ENCODE measurements at regions of chr10 and their contacts with region 1.

Region 1: GRCh38 chr10:132844069-132844809 is 58.3 kb upstream of the NKX6-2 start:
- DNase-seq: no peak
- H3K4me3 ChIP-seq: no peak overlapping the region
- H3K27ac ChIP-seq: no peak overlapping the region
- H3K4me1 ChIP-seq: peaks cover 0 to 7% (median 0%) of the 10 kb centered on the region in 4 donors
- H3K27me3 ChIP-seq: peaks cover 41% of the 10 kb centered on the region
- CTCF ChIP-seq: no peak
- EP300 ChIP-seq: no peak
- POLR2A ChIP-seq: no peak

Region 2: GRCh38 chr10:131490991-131491594 is 1353.1 kb before region 1 on chr10:
- in situ Hi-C with region 1: no loop called
- intact Hi-C with region 1: loop called (anchors 5 kb)
- DNase-seq: no peak
- H3K4me3 ChIP-seq: no peak overlapping the region
- H3K27ac ChIP-seq: no peak overlapping the region
- H3K4me1 ChIP-seq: no peaks in the 10 kb centered on the region
- H3K27me3 ChIP-seq: no peaks in the 10 kb centered on the region
- CTCF ChIP-seq: no peak
- EP300 ChIP-seq: no peak
- POLR2A ChIP-seq: no peak

Region 3: GRCh38 chr10:132011024-132011423 is 833.2 kb before region 1 on chr10:
- in situ Hi-C with region 1: no loop called
- intact Hi-C with region 1: no loop called
- DNase-seq: no peak
- H3K4me3 ChIP-seq: no peak overlapping the region
- H3K27ac ChIP-seq: peak overlapping the region in 2 of 4 donors; percentile 36 to 51
- H3K4me1 ChIP-seq: no peaks in the 10 kb centered on the region
- H3K27me3 ChIP-seq: peaks cover 4% of the 10 kb centered on the region
- CTCF ChIP-seq: no peak
- EP300 ChIP-seq: no peak
- POLR2A ChIP-seq: no peak

Region 4: GRCh38 chr10:132879408-132880127 is 35.3 kb after region 1 on chr10:
- in situ Hi-C with region 1: no loop called
- intact Hi-C with region 1: no loop called
- DNase-seq: no peak
- H3K4me3 ChIP-seq: no peak overlapping the region
- H3K27ac ChIP-seq: no peak overlapping the region
- H3K4me1 ChIP-seq: peaks cover 0 to 4% (median 0%) of the 10 kb centered on the region in 4 donors
- H3K27me3 ChIP-seq: peaks cover 44% of the 10 kb centered on the region
- CTCF ChIP-seq: no peak
- EP300 ChIP-seq: no peak
- POLR2A ChIP-seq: no peak